Spleen (tissue), 13 donors: ENCODE measurements at regions of chr6 and their contacts with region 1.

Region 1: GRCh38 chr6:26196846-26197648 is 109.8 kb downstream of the HFE start:
- DNase-seq: peak; percentile 93
- H3K4me3 ChIP-seq: peak overlapping the region; percentile 31 to 82 (median 55)
- H3K27ac ChIP-seq: peak overlapping the region; percentile 86 to 100 (median 98)
- H3K4me1 ChIP-seq: peaks cover 3 to 60% (median 24%) of the 10 kb centered on the region in 6 donors
- H3K27me3 ChIP-seq: no peaks in the 10 kb centered on the region
- CTCF ChIP-seq: peak in 1 of 11 experiments; percentile 5
- POLR2A ChIP-seq: peak; percentile 90 to 94 (median 90)

Region 2: GRCh38 chr6:26075063-26075717 is 121.9 kb before region 1 on chr6:
- intact Hi-C with region 1: no loop called
- DNase-seq: no peak
- H3K4me3 ChIP-seq: no peak overlapping the region
- H3K27ac ChIP-seq: no peak overlapping the region
- H3K4me1 ChIP-seq: peaks cover 0 to 9% (median 0%) of the 10 kb centered on the region in 6 donors
- H3K27me3 ChIP-seq: no peaks in the 10 kb centered on the region
- CTCF ChIP-seq: no peak
- POLR2A ChIP-seq: no peak

Region 3: GRCh38 chr6:26156076-26156849 is 40.8 kb before region 1 on chr6:
- intact Hi-C with region 1: loop called (anchors 5 kb)
- DNase-seq: peak; percentile 99
- H3K4me3 ChIP-seq: peak overlapping the region; percentile 43 to 83 (median 56)
- H3K27ac ChIP-seq: peak overlapping the region; percentile 97 to 99 (median 98)
- H3K4me1 ChIP-seq: peaks cover 4 to 46% (median 30%) of the 10 kb centered on the region in 6 donors
- H3K27me3 ChIP-seq: no peaks in the 10 kb centered on the region
- CTCF ChIP-seq: peak in 4 of 11 experiments; percentile 10 to 30 (median 23)
- POLR2A ChIP-seq: peak; percentile 99 to 100 (median 100)